Breast epithelium (tissue), 4 donors: ENCODE measurements at regions of chr10 and their contacts with region 1.

Region 1: GRCh38 chr10:131899695-131900349 is 986 bp upstream of the PPP2R2D start:
- DNase-seq: no peak
- H3K4me3 ChIP-seq: peak overlapping the region; percentile 67 to 98 (median 83)
- H3K27ac ChIP-seq: peak overlapping the region; percentile 94 to 96
- H3K4me1 ChIP-seq: no peaks in the 10 kb centered on the region
- H3K27me3 ChIP-seq: no peaks in the 10 kb centered on the region
- CTCF ChIP-seq: no peak
- POLR2A ChIP-seq: no peak

Region 2: GRCh38 chr10:132023092-132023811 is 123.4 kb after region 1 on chr10:
- intact Hi-C with region 1: loop called (anchors 10 kb)
- DNase-seq: peak; percentile 60 to 85
- H3K4me3 ChIP-seq: peak overlapping the region; percentile 24 to 66 (median 41)
- H3K27ac ChIP-seq: no peak overlapping the region
- H3K4me1 ChIP-seq: no peaks in the 10 kb centered on the region
- H3K27me3 ChIP-seq: peaks cover 0 to 18% of the 10 kb centered on the region in 2 donors
- CTCF ChIP-seq: peak; percentile 66 to 88 (median 84)
- POLR2A ChIP-seq: no peak